Lower leg skin (tissue), 4 donors: ENCODE measurements at regions of chr12 and their contacts with region 1.

Region 1: DNA sequence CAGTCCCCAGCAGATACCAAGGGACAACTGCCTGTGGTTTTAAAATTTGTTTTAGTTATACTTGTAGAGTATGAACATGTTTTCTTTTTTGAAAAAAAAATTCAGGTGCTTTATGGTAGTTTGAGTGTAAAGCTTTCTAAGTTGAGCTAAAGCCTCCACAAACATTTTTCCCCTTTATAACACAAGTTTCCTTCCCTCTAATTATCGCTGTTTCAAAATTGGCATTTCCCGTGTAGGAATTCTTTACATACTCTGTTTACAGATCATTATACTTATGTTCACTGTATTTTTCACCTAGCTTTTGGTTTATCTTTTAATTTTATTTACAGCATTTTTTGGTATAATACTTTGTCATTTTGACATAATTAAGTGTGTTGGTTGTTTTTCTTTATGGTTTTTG is 34.1 kb downstream of the ERC1 start:
- DNase-seq: no peak
- H3K4me3 ChIP-seq: no peak overlapping the region
- CTCF ChIP-seq: no peak
- POLR2A ChIP-seq: no peak

Region 2: DNA sequence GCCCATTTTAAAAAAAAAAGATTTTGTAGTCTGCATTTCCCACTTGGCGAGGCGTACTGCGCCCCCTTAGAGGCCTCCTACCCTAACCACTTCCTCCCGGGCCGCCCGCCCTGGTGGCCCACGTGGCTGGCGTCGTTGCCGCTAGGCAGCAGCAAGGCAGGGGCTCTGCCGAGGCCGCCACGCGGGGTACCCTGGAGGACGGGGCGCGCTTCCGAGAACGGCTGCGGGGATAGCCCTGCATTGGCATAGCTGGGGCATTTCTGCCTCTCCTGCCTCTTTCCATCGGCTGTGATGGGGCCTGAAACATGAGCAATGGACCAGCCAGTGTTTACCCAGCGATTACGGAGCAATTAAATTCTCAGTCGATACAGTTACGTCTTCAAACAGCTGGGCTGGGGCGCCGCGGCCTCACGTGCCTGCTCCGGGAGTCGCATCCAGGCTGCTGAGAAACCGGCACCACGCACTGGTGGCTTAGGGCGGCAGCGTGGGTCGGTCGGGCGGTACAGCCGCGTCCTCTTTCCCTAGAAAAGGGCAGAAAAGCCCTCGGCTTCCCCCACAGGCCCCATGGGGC is 920.5 kb before region 1 on chr12:
- intact Hi-C with region 1: loop called (anchors 5 kb)
- DNase-seq: no peak
- H3K4me3 ChIP-seq: no peak overlapping the region
- CTCF ChIP-seq: no peak
- POLR2A ChIP-seq: no peak